ENCODE measurements at regions of chr6 and their contacts with region 1.

Region 1: DNA sequence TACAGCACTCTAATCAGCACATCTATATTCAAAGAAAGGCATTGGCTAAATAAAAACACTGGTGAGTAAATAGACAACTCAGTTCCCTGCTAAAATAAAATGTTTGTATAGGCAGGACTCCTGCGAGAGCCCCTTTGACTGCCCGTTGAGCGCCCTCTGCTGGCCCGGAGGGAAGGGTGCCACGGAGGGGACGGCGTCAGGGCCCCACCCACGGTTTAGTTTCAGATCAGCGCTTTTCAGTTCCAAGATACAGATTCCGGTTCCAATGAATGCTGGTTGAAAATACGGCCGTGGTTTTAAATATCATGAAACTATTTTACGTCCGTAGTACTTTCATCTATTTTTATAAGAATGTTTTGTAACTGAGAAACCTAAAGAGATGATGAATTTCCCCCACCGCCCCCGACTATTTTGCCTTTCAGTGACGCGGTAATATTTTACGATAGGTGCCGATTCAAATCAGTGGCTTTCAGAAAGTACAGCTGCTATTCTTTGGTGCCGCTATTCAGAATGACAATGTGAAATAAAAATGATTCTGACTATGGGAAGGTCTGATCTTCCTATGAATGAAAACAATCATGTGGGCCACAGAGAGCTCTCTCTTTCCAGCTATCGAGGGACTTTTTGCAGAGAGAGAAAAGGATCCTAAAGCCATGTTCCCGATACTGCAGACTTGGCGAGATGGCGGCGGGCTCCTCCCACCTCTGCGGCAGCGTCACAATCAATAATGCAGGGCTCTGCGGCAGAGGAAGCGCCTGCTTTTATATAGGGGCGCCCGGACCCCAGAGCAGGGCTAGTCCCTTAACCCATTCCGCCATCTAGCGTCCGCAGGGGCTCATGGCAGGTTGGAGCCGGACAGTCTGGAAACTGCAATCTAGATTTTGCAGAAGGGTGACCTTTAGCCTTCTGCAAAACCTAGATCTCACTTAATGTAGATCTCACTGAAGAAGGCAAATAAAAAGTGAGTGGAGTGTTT is 10.6 kb upstream of the CCN6 start:
- DNase-seq: peak; percentile 91 to 97
- ATAC-seq: peak; percentile 97
- H3K4me3 ChIP-seq: peak overlapping the region; percentile 70 to 96
- H3K27ac ChIP-seq: peak overlapping the region; percentile 15 to 26
- H3K4me1 ChIP-seq: no peaks in the 10 kb centered on the region
- H3K27me3 ChIP-seq: no peaks in the 10 kb centered on the region

Region 2: GRCh38 chr6:111709615-111710398 is 333.5 kb before region 1 on chr6:
- intact Hi-C with region 1: loop called (anchors 1 kb)
- DNase-seq: peak; percentile 72 to 78
- ATAC-seq: peak; percentile 91
- H3K4me3 ChIP-seq: no peak overlapping the region
- H3K27ac ChIP-seq: no peak overlapping the region
- H3K4me1 ChIP-seq: no peaks in the 10 kb centered on the region
- H3K27me3 ChIP-seq: no peaks in the 10 kb centered on the region

Region 3: DNA sequence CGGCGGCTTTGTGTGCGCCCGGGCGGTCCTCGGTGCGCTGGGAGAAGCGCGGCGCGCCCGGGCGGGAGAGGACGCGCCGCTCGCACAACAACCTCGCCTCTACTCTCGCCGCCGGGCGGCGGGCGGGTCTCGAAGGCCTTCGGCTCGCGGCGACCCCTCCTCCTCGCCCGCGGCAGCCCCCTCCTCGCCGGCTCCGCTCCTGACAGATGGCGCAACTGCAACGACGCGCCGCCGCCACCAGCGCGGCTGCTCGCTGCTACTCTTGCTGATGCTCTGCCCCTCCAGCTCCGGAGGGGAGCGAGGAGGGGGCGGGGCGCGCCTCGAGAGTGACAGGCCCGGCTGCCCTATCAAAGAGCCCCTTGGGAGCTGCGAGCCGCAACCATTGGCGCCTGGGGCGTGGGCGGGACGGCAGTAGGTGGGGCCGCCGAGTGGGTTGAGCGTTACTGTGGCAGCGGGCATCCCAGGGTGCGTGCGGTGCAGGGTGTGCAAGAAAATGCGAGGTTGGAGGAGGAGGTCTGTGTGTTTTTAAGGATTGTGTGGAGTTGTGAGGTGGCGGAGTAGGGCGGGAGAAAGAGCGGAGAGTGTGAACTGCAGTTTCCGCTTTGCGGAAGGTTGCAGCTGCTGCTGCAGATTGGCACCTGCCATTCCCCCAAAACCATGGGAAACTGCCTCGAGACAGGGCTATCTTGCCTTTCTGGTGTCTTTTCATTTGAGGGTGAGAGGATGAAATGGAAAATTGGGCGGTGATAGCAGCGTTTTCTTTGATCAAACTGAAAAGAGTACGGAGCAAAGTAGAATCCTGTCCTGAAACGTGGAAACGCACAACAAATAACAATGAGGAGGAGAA is 169.9 kb before region 1 on chr6 and contains the start of gene FYN:
- intact Hi-C with region 1: loop called (anchors 5 kb)
- DNase-seq: peak; percentile 99
- ATAC-seq: peak; percentile 100
- H3K4me3 ChIP-seq: peak within 1 kb of the TSS; percentile 69 to 97
- H3K27ac ChIP-seq: no peak within 1 kb of the TSS
- H3K4me1 ChIP-seq: no peaks in the 10 kb centered on the region
- H3K27me3 ChIP-seq: no peaks in the 10 kb centered on the region
- total RNA-seq, gene FYN: 100 to 162 TPM

Region 4: DNA sequence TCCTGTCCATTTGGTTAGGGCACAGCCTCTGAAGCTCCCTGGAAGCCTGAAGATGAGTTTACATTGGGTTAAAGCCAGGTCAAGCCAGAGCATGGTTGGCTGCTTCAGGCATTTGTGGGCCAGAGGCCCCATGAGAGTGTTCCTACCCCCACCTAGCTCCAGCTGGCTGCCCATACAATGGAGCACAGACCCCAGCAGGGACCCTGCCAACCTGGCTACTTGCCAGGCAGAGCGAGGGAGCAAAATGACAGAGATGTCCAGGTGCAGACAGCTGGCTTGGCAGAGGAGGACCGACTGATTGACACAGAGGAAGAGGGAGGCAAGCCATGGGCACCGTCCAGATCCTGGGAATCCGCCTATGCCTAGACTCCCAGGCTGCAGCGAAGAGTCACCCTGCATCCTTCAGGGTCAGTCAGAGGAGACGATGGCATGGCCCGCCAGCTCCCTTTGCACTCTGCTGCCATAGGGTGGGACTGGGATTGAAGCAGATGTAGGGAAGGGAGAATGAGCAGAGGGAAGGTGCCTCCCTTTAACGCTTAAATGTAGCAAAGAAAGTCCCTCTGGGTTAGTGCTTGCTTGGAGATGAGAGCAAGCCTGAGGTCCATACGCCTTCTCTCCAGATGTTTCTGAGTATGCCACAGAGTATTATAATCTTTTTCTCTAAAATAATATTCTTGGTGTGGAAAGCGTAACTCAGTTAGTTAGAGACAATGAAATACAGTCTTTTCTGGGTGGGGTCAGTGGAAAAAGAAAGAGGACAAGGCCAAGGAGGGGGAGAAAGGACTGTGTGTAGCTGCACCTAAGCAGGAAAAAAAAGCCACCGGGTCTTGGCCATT is 92.4 kb before region 1 on chr6:
- intact Hi-C with region 1: no loop called
- DNase-seq: peak in 1 of 2 donors; percentile 55
- ATAC-seq: no peak
- H3K4me3 ChIP-seq: no peak overlapping the region
- H3K27ac ChIP-seq: no peak overlapping the region
- H3K4me1 ChIP-seq: no peaks in the 10 kb centered on the region
- H3K27me3 ChIP-seq: no peaks in the 10 kb centered on the region

Region 5: DNA sequence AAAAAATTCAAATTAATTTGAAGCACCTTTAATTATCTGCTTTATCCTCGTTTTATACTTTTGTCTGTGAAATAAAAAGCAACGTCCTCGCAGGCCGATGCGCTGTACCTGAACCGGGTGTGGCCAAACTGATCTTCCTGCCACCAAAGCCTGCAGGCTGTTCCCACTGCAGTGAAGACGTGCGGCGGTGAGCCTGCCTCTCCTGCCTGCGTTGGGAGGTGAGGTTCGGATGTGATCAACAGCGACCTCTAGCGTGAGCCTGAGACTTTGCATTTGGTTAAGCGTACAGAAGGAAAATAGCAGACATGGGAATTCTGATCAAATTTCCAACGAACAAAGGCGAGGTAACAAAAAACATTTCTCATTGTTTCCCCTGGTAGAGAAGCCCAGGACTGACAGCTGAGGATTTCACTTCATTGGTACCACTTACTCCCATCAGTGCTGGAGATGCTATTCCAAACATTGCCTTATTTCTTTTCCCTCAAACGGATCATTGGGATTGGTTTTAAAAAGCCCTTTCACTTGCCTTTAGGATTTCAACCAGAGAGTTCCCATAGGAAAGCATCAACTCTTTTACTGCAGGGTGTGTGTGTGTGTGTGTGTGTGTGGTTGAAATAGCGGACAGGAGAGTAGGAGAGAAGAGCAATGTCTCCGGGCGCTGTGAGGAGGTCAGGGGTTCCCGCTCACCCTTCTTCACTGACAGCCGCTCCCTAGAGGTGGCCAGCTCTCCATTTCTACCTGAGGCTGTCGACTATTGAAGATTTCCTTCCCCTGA is 46.1 kb before region 1 on chr6:
- intact Hi-C with region 1: loop called (anchors 5 kb)
- DNase-seq: peak; percentile 88 to 91
- ATAC-seq: peak; percentile 94
- H3K4me3 ChIP-seq: no peak overlapping the region
- H3K27ac ChIP-seq: no peak overlapping the region
- H3K4me1 ChIP-seq: no peaks in the 10 kb centered on the region
- H3K27me3 ChIP-seq: no peaks in the 10 kb centered on the region

Region 6: DNA sequence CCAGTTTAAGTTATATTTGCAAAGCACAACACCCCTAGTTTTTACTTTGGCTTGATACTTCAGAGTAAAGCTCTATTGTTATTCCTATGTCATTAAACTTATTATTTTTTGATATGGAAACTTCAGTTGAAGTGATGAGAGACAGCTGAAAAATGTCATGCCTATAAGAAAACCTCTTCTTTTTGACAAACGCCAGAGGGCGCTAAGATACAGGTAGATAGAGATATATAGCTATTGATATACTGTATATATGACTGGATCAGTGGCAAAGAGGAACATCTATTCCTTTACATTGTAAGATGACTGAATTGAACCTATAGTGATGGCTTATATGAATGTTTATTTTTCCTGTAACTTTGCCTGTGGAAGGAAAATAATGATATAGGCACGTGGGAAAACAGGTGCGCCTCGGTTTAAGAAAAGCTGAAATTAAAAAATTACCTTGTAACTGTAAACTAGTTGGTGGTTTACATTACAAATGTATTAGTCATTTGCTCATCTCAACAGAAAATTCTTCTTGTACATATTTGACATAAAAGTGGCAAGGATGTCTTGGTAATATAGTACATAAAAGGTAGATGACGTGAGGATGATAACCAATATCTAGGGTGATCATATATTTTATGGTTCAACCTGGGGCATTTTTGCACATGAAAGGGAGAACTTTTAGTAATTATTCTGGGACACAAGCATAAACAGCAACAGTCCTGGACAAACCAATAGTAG is 136.9 kb after region 1 on chr6:
- intact Hi-C with region 1: no loop called
- DNase-seq: no peak
- ATAC-seq: peak; percentile 75
- H3K4me3 ChIP-seq: no peak overlapping the region
- H3K27ac ChIP-seq: no peak overlapping the region
- H3K4me1 ChIP-seq: no peaks in the 10 kb centered on the region
- H3K27me3 ChIP-seq: no peaks in the 10 kb centered on the region